Left ventricle myocardium inferior (tissue), 1 donor: ENCODE measurements at regions of chr2 and their contacts with region 1.

Region 1: GRCh38 chr2:184326066-184326465 is 272.3 kb upstream of the ZNF804A start:
- DNase-seq: no peak
- H3K4me3 ChIP-seq: no peak overlapping the region
- H3K27ac ChIP-seq: no peak overlapping the region
- H3K4me1 ChIP-seq: no peaks in the 10 kb centered on the region
- H3K27me3 ChIP-seq: no peaks in the 10 kb centered on the region
- CTCF ChIP-seq: no peak

Region 2: GRCh38 chr2:184053326-184053725 is 272.7 kb before region 1 on chr2:
- intact Hi-C with region 1: no loop called
- DNase-seq: no peak
- H3K4me3 ChIP-seq: no peak overlapping the region
- H3K27ac ChIP-seq: no peak overlapping the region
- H3K4me1 ChIP-seq: no peaks in the 10 kb centered on the region
- H3K27me3 ChIP-seq: no peaks in the 10 kb centered on the region
- CTCF ChIP-seq: no peak

Region 3: DNA sequence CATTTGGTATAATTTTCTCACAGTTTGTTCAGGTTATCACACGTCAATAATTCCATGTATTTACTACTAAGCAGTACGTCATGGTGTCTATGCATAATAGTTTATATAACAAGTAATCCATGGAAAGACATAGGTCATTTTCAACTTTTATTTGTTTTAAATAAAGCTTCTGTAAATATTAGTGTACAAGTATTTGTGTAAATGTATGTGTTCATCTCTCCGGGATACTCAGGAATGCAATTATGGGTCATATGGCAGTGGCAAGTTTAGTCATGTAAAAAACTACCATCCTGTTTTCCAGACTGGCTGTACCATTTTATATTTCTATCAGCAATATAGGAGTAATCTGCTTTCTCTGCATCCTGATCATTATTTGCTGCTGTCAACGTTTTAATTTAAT is 41.1 kb after region 1 on chr2:
- intact Hi-C with region 1: loop called (anchors 2 kb)
- DNase-seq: no peak
- H3K4me3 ChIP-seq: no peak overlapping the region
- H3K27ac ChIP-seq: no peak overlapping the region
- H3K4me1 ChIP-seq: no peaks in the 10 kb centered on the region
- H3K27me3 ChIP-seq: no peaks in the 10 kb centered on the region
- CTCF ChIP-seq: no peak

Region 4: DNA sequence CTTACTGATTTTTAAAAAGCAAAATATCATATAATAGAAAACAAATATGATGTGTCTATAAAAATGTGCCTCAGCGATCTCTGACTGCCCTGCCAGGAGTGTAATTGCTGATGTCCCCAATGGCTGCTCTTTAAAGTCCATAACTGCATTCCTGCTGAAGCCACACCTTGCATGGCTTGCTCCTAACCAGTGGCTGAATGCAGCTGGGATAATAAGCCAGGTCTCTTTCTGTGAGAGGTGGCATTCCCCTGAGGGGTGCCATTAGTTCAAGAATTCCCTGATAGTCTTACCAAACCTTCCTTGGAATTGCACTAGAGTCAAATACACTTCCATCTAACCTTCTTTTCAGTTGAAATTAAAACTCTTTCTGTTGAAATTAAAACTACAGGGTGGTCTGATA is 146.4 kb after region 1 on chr2:
- intact Hi-C with region 1: no loop called
- DNase-seq: no peak
- H3K4me3 ChIP-seq: no peak overlapping the region
- H3K27ac ChIP-seq: no peak overlapping the region
- H3K4me1 ChIP-seq: no peaks in the 10 kb centered on the region
- H3K27me3 ChIP-seq: no peaks in the 10 kb centered on the region
- CTCF ChIP-seq: no peak